ENCODE measurements at regions of chr4 and their contacts with region 1.

Region 1: GRCh38 chr4:153142700-153143438 is 61.4 kb upstream of the TRIM2 start:
- DNase-seq: peak; percentile 79
- H3K4me3 ChIP-seq: no peak overlapping the region
- H3K27ac ChIP-seq: no peak overlapping the region
- H3K4me1 ChIP-seq: peaks cover 14% of the 10 kb centered on the region
- H3K27me3 ChIP-seq: no peaks in the 10 kb centered on the region
- CTCF ChIP-seq: peak; percentile 80
- POLR2A ChIP-seq: no peak

Region 2: DNA sequence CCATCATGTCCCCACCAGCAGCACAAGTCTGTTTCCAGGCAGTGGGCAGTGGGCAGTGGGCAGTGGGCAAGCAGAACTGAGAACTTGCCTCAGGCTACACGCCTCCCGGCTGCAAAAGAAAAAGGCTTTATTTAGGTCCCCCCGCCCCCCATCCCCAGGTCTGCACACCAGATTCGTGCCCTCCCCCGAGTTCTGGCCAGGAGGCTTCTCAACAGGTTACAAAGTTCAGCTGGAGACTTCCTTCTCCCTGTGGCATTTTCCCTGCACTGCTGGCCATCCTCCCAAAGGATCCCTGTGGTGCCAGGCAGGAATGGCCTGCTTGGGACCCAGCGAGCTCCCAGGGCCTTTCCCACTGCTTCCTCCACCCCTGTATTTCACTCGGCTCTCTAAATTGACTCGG is 35.6 kb before region 1 on chr4:
- CTCF ChIA-PET with region 1: no interaction called
- POLR2A ChIA-PET with region 1: no interaction called
- dilution Hi-C with region 1: no loop called
- intact Hi-C with region 1: no loop called
- DNase-seq: no peak
- H3K4me3 ChIP-seq: no peak overlapping the region
- H3K27ac ChIP-seq: no peak overlapping the region
- H3K4me1 ChIP-seq: no peaks in the 10 kb centered on the region
- H3K27me3 ChIP-seq: peaks cover 0 to 5% of the 10 kb centered on the region in 2 experiments
- CTCF ChIP-seq: no peak
- POLR2A ChIP-seq: no peak

Region 3: GRCh38 chr4:153204247-153205027 is 61.6 kb after region 1 on chr4 and contains the start of gene TRIM2:
- CTCF ChIA-PET with region 1: interaction called, 14 read pairs
- POLR2A ChIA-PET with region 1: no interaction called
- dilution Hi-C with region 1: no loop called
- intact Hi-C with region 1: loop called (anchors 2 kb)
- DNase-seq: peak; percentile 67
- H3K4me3 ChIP-seq: no peak within 1 kb of the TSS
- H3K27ac ChIP-seq: no peak within 1 kb of the TSS
- H3K4me1 ChIP-seq: peaks cover 2% of the 10 kb centered on the region
- H3K27me3 ChIP-seq: no peaks in the 10 kb centered on the region
- CTCF ChIP-seq: no peak
- POLR2A ChIP-seq: no peak
- total RNA-seq, gene TRIM2: 16.4 and 19.7 TPM in 2 replicates

Region 4: GRCh38 chr4:153257151-153257620 is 114.3 kb after region 1 on chr4:
- CTCF ChIA-PET with region 1: interaction called, 10 read pairs
- POLR2A ChIA-PET with region 1: no interaction called
- dilution Hi-C with region 1: no loop called
- intact Hi-C with region 1: no loop called
- DNase-seq: peak; percentile 48
- H3K4me3 ChIP-seq: no peak overlapping the region
- H3K27ac ChIP-seq: no peak overlapping the region
- H3K4me1 ChIP-seq: peaks cover 3% of the 10 kb centered on the region
- H3K27me3 ChIP-seq: no peaks in the 10 kb centered on the region
- CTCF ChIP-seq: no peak
- POLR2A ChIP-seq: no peak

Region 5: DNA sequence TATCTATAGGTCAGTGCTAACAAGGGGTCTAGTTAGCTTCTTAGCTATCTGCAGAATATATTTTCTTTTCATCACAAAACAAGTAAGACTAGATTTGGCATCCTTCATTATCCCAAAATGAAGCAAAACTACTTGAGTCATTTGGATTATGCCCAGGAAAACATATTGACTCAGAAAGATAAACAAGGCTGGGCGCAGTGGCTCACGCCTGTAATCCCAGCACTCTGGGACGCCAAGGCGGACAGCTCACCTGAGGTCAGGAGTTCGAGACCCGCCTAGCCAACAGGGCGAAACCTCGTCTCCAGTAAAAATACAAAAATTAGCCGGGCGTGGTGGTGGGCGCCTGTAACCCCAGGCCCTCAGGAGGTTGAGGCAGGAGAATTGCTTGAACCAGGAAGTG is 183.6 kb after region 1 on chr4:
- CTCF ChIA-PET with region 1: interaction called, 25 read pairs
- POLR2A ChIA-PET with region 1: no interaction called
- dilution Hi-C with region 1: no loop called
- intact Hi-C with region 1: no loop called
- DNase-seq: peak; percentile 37
- H3K4me3 ChIP-seq: no peak overlapping the region
- H3K27ac ChIP-seq: no peak overlapping the region
- H3K4me1 ChIP-seq: peaks cover 19% of the 10 kb centered on the region
- H3K27me3 ChIP-seq: no peaks in the 10 kb centered on the region
- CTCF ChIP-seq: no peak
- POLR2A ChIP-seq: no peak

Region 6: DNA sequence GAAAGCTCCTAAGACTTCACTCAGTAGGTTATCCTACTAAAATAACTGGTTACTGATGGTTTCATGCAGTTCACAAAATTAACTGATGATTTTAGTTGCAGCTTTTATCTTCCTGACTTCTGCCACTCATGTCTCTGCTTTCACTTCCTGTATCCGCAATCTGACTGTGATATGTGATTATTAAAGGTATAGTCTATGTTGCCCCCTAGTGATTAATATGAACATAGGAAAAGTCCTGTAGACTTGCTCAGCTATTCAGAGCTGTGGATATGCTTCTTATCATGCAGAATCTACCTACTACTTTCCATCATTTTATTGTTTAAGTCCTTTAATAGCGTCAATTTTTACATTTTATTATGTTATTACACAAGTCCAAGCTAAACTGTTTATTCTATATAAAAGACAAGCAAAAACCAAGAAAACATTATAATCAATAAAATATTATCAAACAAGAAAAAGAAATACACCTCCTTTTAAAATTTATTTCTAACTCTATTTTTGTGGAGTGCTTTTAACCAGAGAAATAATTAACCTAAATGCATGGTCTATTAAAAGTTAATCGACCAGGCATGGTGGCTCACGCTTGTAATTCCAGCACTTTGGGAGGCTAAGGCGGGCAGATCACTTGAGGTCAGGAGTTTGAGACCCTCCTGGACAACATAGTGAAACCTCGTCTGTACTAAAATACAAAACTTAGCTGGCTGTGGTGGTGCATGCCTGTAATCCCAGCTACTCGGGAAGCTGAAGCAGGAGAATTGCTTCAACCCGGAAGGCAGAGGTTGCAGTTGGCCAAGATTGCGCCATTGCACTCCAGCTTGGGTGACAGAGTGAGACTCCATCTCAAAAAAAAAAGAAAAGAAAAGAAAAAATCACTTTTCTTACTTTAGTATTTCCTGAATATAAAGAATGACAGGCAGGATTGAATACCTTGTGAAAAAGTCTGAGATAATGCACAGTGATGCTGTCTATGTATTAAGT is 500.8 kb after region 1 on chr4:
- CTCF ChIA-PET with region 1: interaction called, 17 read pairs
- POLR2A ChIA-PET with region 1: no interaction called
- dilution Hi-C with region 1: no loop called
- intact Hi-C with region 1: loop called (anchors 1 kb)
- DNase-seq: peak; percentile 56
- H3K4me3 ChIP-seq: no peak overlapping the region
- H3K27ac ChIP-seq: no peak overlapping the region
- H3K4me1 ChIP-seq: peaks cover 4% of the 10 kb centered on the region
- H3K27me3 ChIP-seq: no peaks in the 10 kb centered on the region
- CTCF ChIP-seq: peak; percentile 25 to 26
- POLR2A ChIP-seq: no peak

Measured in endothelial cell of umbilical vein (primary cell).